ENCODE measurements at regions of chr17 and their contacts with region 1.

Region 1: DNA sequence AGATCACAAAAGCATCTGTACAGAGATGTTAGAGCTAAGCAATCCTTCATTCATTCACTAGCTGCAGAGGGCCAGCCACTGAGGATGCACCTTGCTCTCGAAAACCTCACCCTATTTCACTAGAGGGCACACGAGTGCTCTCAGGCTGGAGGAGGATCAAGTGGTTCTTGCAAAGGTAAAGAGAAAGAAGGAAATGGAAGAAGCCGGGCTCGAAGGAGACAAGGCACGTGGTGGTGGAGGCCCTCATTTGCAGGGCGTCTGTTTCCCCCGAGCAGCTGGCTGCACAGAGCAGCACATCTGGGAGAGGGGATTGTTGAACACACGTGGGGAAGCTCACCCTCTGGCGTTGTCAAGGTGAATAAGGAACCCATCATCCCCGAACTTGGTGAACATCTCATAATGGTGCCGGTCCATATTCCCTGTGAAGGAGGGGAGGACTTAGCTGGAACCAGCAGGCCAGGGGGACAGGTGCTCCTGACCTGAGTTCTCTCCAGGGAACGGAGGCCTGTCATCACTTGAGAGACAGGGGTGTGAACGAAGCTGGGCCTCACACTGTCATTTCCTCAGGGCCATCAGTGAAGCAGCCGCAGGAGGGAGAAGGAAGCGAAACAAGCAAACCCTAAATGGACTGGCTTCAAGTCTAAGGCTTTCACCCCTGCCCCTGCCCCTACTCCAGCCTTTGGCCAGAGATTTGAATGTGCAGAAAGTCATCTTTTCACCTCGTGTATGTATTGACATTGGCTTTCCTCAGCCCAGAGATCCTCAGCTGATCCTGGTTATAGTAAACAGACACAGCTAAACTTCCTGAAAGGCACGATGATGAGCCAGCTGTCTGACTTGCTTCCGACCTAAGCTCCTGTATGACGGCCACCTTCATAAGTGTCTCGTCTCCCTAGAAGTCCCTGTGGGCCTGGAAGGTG is 27.6 kb downstream of the PRKAR1A start:
- DNase-seq: no peak
- ATAC-seq: peak; percentile 7 to 38 (median 20)
- H3K4me3 ChIP-seq: no peak overlapping the region
- H3K27ac ChIP-seq: peak overlapping the region in 7 of 10 donors; percentile 1 to 67 (median 46)
- H3K4me1 ChIP-seq: peaks cover 0 to 59% (median 11%) of the 10 kb centered on the region in 9 donors
- H3K27me3 ChIP-seq: no peaks in the 10 kb centered on the region
- CTCF ChIP-seq: peak in 4 of 9 donors; percentile 29 to 43 (median 38)

Region 2: DNA sequence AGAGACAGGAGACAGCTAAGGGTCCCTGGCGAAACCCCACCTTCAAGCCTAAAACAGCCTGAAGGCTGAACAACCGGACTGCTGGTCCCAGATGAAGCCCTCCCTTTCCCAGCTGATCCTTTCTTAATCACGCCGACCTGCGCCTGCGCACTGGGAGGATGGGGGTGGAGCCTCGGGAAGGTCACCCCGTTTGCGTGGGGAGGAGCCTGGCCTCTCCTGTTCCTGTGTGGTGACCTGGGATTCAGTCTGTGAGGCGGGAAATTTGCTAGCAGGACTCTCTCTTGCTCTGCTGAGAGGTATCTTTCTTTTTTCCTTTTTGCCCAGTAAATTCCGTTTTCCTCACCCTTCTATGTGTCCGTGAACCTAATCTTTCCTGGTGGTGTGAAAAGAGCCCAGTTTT is 51.8 kb after region 1 on chr17:
- intact Hi-C with region 1: loop called in 1 of 10 experiments (anchors 10 kb)
- DNase-seq: peak; percentile 29 to 31
- ATAC-seq: peak in 2 of 8 donors; percentile 24 to 52
- H3K4me3 ChIP-seq: no peak overlapping the region
- H3K27ac ChIP-seq: peak overlapping the region in 1 of 10 donors; percentile 45
- H3K4me1 ChIP-seq: peaks cover 0 to 50% (median 15%) of the 10 kb centered on the region in 9 donors
- H3K27me3 ChIP-seq: no peaks in the 10 kb centered on the region
- CTCF ChIP-seq: no peak

Region 3: DNA sequence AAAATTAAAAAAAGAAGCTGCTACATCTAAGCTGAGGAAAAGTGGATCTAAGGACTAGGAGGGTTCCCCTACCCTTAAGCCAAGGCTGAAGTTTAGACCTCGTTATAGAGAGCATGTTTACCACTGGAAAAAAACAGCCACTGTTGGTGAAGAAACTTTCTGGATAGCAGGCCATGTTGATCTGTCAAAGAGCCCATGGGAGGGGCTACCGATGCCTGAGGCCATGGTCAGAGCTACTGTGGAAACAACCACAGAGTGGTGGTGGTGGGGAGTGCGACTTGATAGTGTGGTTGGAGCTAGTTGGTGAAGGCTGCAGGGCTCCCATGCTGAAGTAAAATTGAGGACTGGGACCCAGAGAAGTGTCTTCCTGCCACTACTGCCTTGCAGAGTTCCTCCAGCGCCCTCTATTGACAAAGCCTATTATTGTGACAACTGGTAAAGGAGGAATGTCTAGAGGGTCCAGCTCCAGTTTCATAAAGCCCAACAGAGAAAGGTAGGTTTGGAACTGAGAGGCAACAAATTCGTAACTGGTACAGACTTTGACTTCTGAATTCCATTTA is 74.0 kb after region 1 on chr17:
- intact Hi-C with region 1: loop called in 2 of 10 experiments (anchors 5 kb)
- DNase-seq: peak in 1 of 2 donors; percentile 71
- ATAC-seq: peak in 5 of 8 donors; percentile 52 to 77 (median 70)
- H3K4me3 ChIP-seq: no peak overlapping the region
- H3K27ac ChIP-seq: no peak overlapping the region
- H3K4me1 ChIP-seq: no peaks in the 10 kb centered on the region
- H3K27me3 ChIP-seq: no peaks in the 10 kb centered on the region
- CTCF ChIP-seq: peak in 8 of 9 donors; percentile 46 to 76 (median 70)

Measured in heart right ventricle (tissue), 16 donors.